CD8-positive, alpha-beta T cell (primary cell): ENCODE measurements at regions of chr2 and their contacts with region 1.

Region 1: GRCh38 chr2:127365211-127365643 is 22.5 kb downstream of the MAP3K2 start:
- DNase-seq: peak in 2 of 9 experiments; percentile 27 to 36
- ATAC-seq: peak; percentile 68
- H3K4me3 ChIP-seq: no peak overlapping the region
- H3K4me3 Mint-ChIP-seq: no peak overlapping the region
- H3K27ac ChIP-seq: no peak overlapping the region
- H3K27ac Mint-ChIP-seq: peak overlapping the region; percentile 1
- H3K4me1 ChIP-seq: peaks cover 25% of the 10 kb centered on the region
- H3K4me1 Mint-ChIP-seq: peaks cover 68% of the 10 kb centered on the region
- H3K27me3 ChIP-seq: no peaks in the 10 kb centered on the region
- H3K27me3 Mint-ChIP-seq: no peaks in the 10 kb centered on the region
- CTCF ChIP-seq: no peak

Region 2: DNA sequence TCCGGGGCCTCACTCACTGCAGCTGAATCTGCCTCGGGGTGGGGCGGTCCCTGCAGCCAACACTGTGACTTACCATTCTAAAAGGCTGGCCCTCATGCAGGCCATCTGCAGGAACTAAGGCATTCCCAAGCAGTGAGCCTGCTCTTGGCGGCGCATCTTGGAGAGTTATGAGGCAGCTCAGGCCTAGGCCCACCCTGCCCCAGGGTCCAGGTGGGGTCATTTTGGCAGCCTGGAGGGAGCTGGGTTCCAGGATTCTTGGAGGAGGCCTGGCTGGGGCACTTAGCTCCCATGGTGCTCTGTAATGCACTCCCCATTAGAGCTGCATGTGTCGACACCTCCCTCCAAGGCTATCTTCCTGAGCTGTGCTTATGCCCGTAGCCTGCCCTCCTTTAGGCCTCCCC is 243.5 kb before region 1 on chr2:
- CTCF ChIA-PET with region 1: no interaction called
- POLR2A ChIA-PET with region 1: no interaction called
- intact Hi-C with region 1: no loop called
- DNase-seq: peak in 1 of 9 experiments; percentile 34
- ATAC-seq: no peak
- H3K4me3 ChIP-seq: no peak overlapping the region
- H3K4me3 Mint-ChIP-seq: no peak overlapping the region
- H3K27ac ChIP-seq: no peak overlapping the region
- H3K27ac Mint-ChIP-seq: no peak overlapping the region
- H3K4me1 ChIP-seq: no peaks in the 10 kb centered on the region
- H3K4me1 Mint-ChIP-seq: no peaks in the 10 kb centered on the region
- H3K27me3 ChIP-seq: no peaks in the 10 kb centered on the region
- H3K27me3 Mint-ChIP-seq: no peaks in the 10 kb centered on the region
- CTCF ChIP-seq: no peak

Region 3: DNA sequence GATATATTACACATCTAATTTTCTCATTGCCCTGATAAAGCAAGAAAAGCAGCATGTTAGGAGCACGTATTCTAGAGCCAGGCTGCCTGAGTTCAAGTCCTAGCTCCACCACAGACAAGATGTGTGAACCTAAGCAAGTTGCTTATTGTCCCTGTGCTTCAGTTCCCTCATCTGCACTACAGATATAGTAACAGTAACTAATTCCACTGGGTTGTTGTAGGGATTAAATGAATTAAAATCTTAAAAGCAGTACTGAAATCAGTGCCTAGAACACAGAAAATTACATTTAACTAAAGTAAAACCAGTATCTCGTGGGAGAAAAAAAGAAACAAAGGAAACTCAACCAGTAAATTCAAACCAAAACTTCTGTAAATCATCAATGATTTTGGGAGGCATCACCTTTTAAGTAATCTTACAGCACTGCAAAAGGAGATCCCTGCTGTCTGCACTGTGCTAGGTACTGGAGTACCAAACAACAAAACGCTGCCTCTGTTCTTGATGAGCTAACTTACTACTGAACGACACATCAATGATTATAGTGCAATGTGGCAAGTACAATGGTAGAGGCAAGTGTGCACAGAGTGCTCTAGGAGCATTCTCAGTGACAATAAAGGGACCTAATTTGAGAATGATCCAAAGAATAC is 14.6 kb after region 1 on chr2:
- CTCF ChIA-PET with region 1: no interaction called
- POLR2A ChIA-PET with region 1: no interaction called
- intact Hi-C with region 1: loop called in 1 of 2 experiments (anchors 2 kb)
- DNase-seq: no peak
- ATAC-seq: no peak
- H3K4me3 ChIP-seq: no peak overlapping the region
- H3K4me3 Mint-ChIP-seq: no peak overlapping the region
- H3K27ac ChIP-seq: no peak overlapping the region
- H3K27ac Mint-ChIP-seq: no peak overlapping the region
- H3K4me1 ChIP-seq: peaks cover 26% of the 10 kb centered on the region
- H3K4me1 Mint-ChIP-seq: peaks cover 68% of the 10 kb centered on the region
- H3K27me3 ChIP-seq: no peaks in the 10 kb centered on the region
- H3K27me3 Mint-ChIP-seq: no peaks in the 10 kb centered on the region
- CTCF ChIP-seq: no peak

Region 4: GRCh38 chr2:127408004-127408806 is 43.0 kb after region 1 on chr2:
- CTCF ChIA-PET with region 1: no interaction called
- POLR2A ChIA-PET with region 1: no interaction called
- intact Hi-C with region 1: no loop called
- DNase-seq: peak; percentile 73 to 95 (median 90)
- ATAC-seq: peak; percentile 88
- H3K4me3 ChIP-seq: peak overlapping the region; percentile 16 to 44
- H3K4me3 Mint-ChIP-seq: peak overlapping the region; percentile 65
- H3K27ac ChIP-seq: peak overlapping the region in 1 of 2 experiments; percentile 37
- H3K27ac Mint-ChIP-seq: no peak overlapping the region
- H3K4me1 ChIP-seq: peaks cover 5% of the 10 kb centered on the region
- H3K4me1 Mint-ChIP-seq: peaks cover 12% of the 10 kb centered on the region
- H3K27me3 ChIP-seq: no peaks in the 10 kb centered on the region
- H3K27me3 Mint-ChIP-seq: no peaks in the 10 kb centered on the region
- CTCF ChIP-seq: no peak